ENCODE measurements at regions of chr5 and their contacts with region 1.

Region 1: DNA sequence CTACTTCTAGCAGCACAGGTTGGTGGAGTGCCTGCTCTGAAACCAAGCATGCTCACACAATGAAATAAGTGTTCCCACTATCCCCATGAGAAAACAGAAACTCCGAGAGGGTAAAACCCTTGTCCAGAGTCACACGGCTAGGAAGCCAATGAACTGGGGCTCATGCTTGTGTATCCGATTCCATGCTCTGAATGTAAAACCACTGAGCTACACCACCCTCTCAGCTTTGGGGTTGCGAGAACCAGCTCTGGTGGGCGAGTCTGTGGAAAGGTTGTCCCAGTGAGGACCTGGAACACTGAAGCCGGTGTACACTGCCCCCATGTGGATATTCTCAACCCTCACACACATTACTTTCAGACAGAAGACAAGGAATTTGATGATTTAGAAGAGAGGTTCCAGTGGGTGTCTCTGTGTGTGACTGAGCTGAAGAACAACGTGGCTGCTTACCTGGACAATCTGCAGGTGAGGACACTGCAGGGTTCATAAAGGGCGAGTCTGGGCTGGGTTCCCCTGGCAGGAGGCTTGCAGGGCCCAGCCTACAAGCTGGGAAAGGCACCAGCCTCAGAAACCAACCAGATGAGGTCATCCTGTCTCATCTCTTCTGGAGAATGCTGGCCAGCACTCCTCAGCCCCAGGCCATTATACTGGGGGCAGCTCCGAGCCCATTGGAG is 37.4 kb downstream of the ARHGEF37 start:
- DNase-seq: peak; percentile 57
- ATAC-seq: peak; percentile 69
- H3K4me3 Mint-ChIP-seq: no peak overlapping the region
- H3K27ac Mint-ChIP-seq: no peak overlapping the region
- H3K4me1 Mint-ChIP-seq: peaks cover 29% of the 10 kb centered on the region
- H3K27me3 Mint-ChIP-seq: peaks cover 4% of the 10 kb centered on the region

Region 2: GRCh38 chr5:149561848-149562247 is 56.9 kb before region 1 on chr5:
- CTCF ChIA-PET with region 1: interaction called, 13 read pairs
- DNase-seq: no peak
- ATAC-seq: no peak
- H3K4me3 Mint-ChIP-seq: no peak overlapping the region
- H3K27ac Mint-ChIP-seq: no peak overlapping the region
- H3K4me1 Mint-ChIP-seq: peaks cover 5% of the 10 kb centered on the region
- H3K27me3 Mint-ChIP-seq: no peaks in the 10 kb centered on the region

Region 3: GRCh38 chr5:149605998-149606724 is 12.6 kb before region 1 on chr5:
- CTCF ChIA-PET with region 1: interaction called, 19 read pairs
- DNase-seq: peak; percentile 68
- ATAC-seq: peak; percentile 87
- H3K4me3 Mint-ChIP-seq: peak overlapping the region; percentile 17
- H3K27ac Mint-ChIP-seq: peak overlapping the region; percentile 64
- H3K4me1 Mint-ChIP-seq: peaks cover 22% of the 10 kb centered on the region
- H3K27me3 Mint-ChIP-seq: no peaks in the 10 kb centered on the region

Region 4: GRCh38 chr5:149636851-149637246 is 18.1 kb after region 1 on chr5:
- CTCF ChIA-PET with region 1: interaction called, 13 read pairs
- DNase-seq: peak; percentile 73
- ATAC-seq: peak; percentile 66
- H3K4me3 Mint-ChIP-seq: no peak overlapping the region
- H3K27ac Mint-ChIP-seq: no peak overlapping the region
- H3K4me1 Mint-ChIP-seq: peaks cover 13% of the 10 kb centered on the region
- H3K27me3 Mint-ChIP-seq: no peaks in the 10 kb centered on the region

Region 5: GRCh38 chr5:149667084-149667828 is 48.5 kb after region 1 on chr5:
- CTCF ChIA-PET with region 1: no interaction called
- DNase-seq: peak; percentile 41
- ATAC-seq: peak; percentile 36
- H3K4me3 Mint-ChIP-seq: no peak overlapping the region
- H3K27ac Mint-ChIP-seq: no peak overlapping the region
- H3K4me1 Mint-ChIP-seq: peaks cover 2% of the 10 kb centered on the region
- H3K27me3 Mint-ChIP-seq: peaks cover 7% of the 10 kb centered on the region

Region 6: GRCh38 chr5:149913436-149914419 is 295.0 kb after region 1 on chr5:
- CTCF ChIA-PET with region 1: no interaction called
- DNase-seq: no peak
- ATAC-seq: peak; percentile 16
- H3K4me3 Mint-ChIP-seq: no peak overlapping the region
- H3K27ac Mint-ChIP-seq: no peak overlapping the region
- H3K4me1 Mint-ChIP-seq: peaks cover 13% of the 10 kb centered on the region
- H3K27me3 Mint-ChIP-seq: peaks cover 38% of the 10 kb centered on the region

Measured in activated CD8-positive, alpha-beta memory T cell treated with anti-CD3 and anti-CD28 coated beads, Interleukin-2, amount 10 ng/mL, durations not matched to agents 7 days and 5 days (primary cell).